ENCODE measurements at regions of chr5 and their contacts with region 1.

Region 1: GRCh38 chr5:170100066-170100943 is 5.4 kb upstream of the FOXI1 start:
- DNase-seq: peak; percentile 8
- ATAC-seq: peak; percentile 86
- H3K4me3 ChIP-seq: no peak overlapping the region
- H3K27ac ChIP-seq: no peak overlapping the region
- H3K4me1 ChIP-seq: no peaks in the 10 kb centered on the region
- H3K27me3 ChIP-seq: no peaks in the 10 kb centered on the region
- CTCF ChIP-seq: peak; percentile 56 to 71 (median 60)
- EP300 ChIP-seq: no peak
- POLR2A ChIP-seq: no peak
- RAD21 ChIP-seq: peak; percentile 88

Region 2: DNA sequence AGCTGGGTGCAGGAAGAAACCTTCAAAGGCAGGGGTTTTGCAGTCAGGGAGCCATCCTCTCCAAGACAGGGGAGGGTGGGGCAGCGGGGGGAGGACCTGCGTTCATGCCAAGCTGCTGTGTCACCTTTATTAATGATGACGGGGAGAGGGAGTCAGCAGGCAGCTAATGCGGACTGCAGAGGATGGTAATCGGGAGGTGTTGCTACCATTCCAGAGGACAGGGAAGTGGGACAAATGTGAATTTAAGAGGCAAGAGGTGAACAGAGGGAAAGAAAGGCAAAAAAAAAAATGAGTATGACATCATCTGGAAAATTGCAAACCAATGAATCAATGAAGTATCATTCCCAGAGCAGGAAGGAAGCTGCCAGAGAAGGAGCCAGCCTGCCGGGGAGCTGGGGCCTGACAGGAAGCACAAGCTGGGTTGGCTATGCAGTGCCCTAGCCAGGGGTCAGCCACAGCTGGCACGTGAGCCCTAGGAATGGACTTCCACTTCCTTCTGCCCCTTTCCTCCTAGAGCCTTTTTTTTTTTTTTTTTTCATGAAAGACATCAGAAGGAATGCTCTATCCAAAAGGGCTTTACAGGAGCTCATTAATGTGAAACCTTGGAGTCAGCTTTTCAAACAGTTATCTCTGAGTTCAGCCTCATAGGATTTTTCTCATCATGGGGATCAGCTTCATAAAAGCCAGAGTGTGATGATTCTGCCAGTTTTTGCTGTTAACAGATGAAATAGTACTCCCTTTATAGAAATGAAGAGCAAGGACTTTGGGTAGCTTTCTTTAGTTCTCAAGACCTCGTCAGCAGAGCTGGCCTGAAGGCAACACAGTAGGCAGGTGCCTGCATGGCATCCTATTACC is 129.2 kb before region 1 on chr5:
- CTCF ChIA-PET with region 1: no interaction called
- POLR2A ChIA-PET with region 1: no interaction called
- RAD21 ChIA-PET with region 1: no interaction called
- SMC1A ChIA-PET with region 1: no interaction called
- in situ Hi-C with region 1: no loop called
- intact Hi-C with region 1: no loop called
- DNase-seq: no peak
- ATAC-seq: no peak
- H3K4me3 ChIP-seq: no peak overlapping the region
- H3K27ac ChIP-seq: no peak overlapping the region
- H3K4me1 ChIP-seq: no peaks in the 10 kb centered on the region; the same call in 1 of the 2 replicates
- H3K27me3 ChIP-seq: no peaks in the 10 kb centered on the region
- CTCF ChIP-seq: no peak
- EP300 ChIP-seq: no peak
- POLR2A ChIP-seq: no peak
- RAD21 ChIP-seq: no peak

Region 3: DNA sequence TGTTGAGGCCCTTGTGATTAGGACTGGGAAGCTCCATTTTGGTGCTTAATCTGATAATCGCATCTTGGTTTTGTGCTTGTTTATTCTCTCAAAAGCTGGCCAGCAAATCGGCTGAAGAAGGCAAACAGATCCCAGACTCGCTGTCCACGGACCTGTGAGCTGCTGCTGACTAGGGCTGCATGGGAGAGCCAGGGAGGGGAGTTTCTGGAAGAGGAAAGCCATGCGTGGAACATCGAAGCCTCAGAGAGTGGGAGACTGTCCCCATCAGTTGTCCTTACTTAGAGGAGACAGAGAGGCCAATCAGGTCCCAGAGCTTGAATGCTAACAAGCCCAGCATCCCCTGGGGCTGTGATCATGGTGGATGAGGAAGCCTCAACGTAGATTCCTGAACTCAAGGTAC is 17.6 kb before region 1 on chr5:
- CTCF ChIA-PET with region 1: no interaction called
- POLR2A ChIA-PET with region 1: no interaction called
- RAD21 ChIA-PET with region 1: no interaction called
- SMC1A ChIA-PET with region 1: no interaction called
- in situ Hi-C with region 1: no loop called
- intact Hi-C with region 1: no loop called
- DNase-seq: no peak
- ATAC-seq: no peak
- H3K4me3 ChIP-seq: no peak overlapping the region
- H3K27ac ChIP-seq: no peak overlapping the region
- H3K4me1 ChIP-seq: no peaks in the 10 kb centered on the region
- H3K27me3 ChIP-seq: no peaks in the 10 kb centered on the region
- CTCF ChIP-seq: no peak
- EP300 ChIP-seq: no peak
- POLR2A ChIP-seq: no peak
- RAD21 ChIP-seq: no peak

Region 4: GRCh38 chr5:170216266-170216864 is 116.1 kb after region 1 on chr5:
- CTCF ChIA-PET with region 1: interaction called, 8 read pairs
- POLR2A ChIA-PET with region 1: no interaction called
- RAD21 ChIA-PET with region 1: interaction called, 12 read pairs
- SMC1A ChIA-PET with region 1: interaction called, 7 read pairs
- in situ Hi-C with region 1: no loop called
- intact Hi-C with region 1: loop called (anchors 1 kb)
- DNase-seq: no peak
- ATAC-seq: peak; percentile 82
- H3K4me3 ChIP-seq: no peak overlapping the region
- H3K27ac ChIP-seq: no peak overlapping the region
- H3K4me1 ChIP-seq: no peaks in the 10 kb centered on the region
- H3K27me3 ChIP-seq: 0 out of 4 replicates have a peak, but pooled peaks cover 0 to 2% of the 10 kb centered on the region in 2 experiments
- CTCF ChIP-seq: peak; percentile 57 to 77 (median 64)
- EP300 ChIP-seq: no peak
- POLR2A ChIP-seq: no peak
- RAD21 ChIP-seq: peak; percentile 70

Region 5: DNA sequence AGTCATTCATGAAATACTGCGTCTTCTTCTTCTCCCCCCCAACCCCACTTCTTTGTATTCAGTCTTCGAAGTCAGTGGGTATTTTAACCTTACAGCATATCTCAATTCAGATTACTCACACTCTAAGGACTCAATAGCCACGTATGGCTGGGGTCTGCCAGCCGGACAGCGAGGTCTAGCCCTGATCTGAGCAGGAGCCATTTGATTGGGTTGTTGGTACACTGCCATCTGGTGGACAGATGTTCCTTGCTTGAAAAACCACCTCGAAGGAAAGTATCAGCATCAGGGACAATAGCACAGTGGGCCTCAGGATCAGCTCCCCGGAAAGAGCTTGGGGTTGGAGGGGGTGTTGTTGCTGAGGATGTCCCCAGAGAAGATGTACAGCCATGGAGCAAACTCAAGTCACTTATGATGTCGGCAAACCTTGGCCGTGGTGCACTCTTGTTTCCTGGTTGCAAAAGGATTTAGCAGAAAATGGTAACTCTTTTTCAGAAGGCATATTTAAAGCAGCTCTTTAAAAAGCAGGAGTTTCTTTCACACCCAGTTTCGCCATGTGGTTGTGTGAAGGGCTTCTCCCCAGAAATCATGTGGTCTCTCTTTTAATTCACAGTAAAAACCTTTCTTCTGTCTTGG is 320.6 kb after region 1 on chr5:
- CTCF ChIA-PET with region 1: interaction called, 6 read pairs
- POLR2A ChIA-PET with region 1: no interaction called
- RAD21 ChIA-PET with region 1: no interaction called
- SMC1A ChIA-PET with region 1: no interaction called
- in situ Hi-C with region 1: no loop called
- intact Hi-C with region 1: loop called (anchors 1 kb)
- DNase-seq: no peak
- ATAC-seq: peak; percentile 92
- H3K4me3 ChIP-seq: no peak overlapping the region
- H3K27ac ChIP-seq: no peak overlapping the region
- H3K4me1 ChIP-seq: no peaks in the 10 kb centered on the region
- H3K27me3 ChIP-seq: no peaks in the 10 kb centered on the region; a peak in 1 of 4 replicates
- CTCF ChIP-seq: peak; percentile 65 to 73 (median 68)
- EP300 ChIP-seq: no peak
- POLR2A ChIP-seq: no peak
- RAD21 ChIP-seq: peak; percentile 76

Measured in GM12878 (cell line).